Activated B cell treated with CpG ODN at 0.5 μM for 24 hours (primary cell): ENCODE measurements at regions of chr2 and their contacts with region 1.

Region 1: DNA sequence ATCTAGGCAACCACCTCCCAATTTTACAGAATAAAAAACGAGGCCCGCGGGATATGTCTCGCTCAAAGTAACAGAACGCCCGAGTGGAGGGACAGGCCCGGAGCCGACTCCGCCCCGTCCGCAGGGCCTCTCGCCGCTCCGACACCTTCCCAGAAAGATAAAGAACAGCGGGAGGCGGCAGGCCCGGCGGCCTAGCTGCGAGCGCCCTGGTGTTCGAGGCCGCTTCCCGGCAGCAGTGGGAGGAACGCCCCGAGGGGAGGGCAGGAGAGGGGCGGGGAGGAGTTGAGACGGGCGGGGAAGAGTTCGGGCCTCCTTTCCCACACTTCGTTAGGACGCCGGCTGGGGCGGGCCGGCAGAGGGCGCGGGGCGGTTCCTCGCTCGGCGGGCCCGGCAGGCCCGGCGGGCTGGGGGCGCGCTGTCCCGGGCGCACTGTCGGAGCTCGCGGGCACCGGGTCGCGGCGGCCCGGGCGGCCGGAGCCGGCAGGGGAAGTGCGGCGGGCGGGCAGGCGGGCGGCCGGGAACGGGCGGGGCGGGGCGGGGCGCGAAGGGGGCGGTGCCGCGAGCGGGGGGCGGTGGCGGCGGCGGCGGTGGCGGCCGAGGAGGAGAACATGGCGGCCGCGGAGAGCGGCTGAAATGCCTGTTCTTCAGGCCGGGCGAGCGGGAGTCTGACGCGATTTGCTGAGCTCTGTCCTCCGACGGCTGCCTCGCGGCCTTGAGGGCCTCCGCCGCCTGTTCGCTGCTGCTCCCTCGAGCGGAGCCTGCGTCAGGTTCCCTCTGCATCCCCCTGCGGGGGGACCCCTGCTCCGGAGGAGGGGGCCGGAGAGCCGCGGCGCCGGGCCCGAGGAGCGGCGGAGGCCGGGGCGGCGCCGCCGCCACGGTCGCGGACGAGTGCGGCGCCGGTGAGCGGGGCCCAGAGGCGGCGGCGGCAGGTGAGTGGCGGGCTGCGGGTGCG is at the start of gene NCOA1:
- DNase-seq: peak; percentile 87
- ATAC-seq: peak; percentile 82
- H3K4me3 Mint-ChIP-seq: peak within 1 kb of the TSS; percentile 94
- H3K27ac Mint-ChIP-seq: peak within 1 kb of the TSS; percentile 95
- H3K4me1 Mint-ChIP-seq: peaks cover 42% of the 10 kb centered on the region
- H3K27me3 Mint-ChIP-seq: no peaks in the 10 kb centered on the region
- CTCF ChIP-seq: no peak
- total RNA-seq, gene NCOA1: 44.9 and 49.5 TPM in 2 replicates

Region 2: GRCh38 chr2:24334245-24334633 is 156.7 kb before region 1 on chr2:
- CTCF ChIA-PET with region 1: no interaction called
- POLR2A ChIA-PET with region 1: no interaction called
- intact Hi-C with region 1: no loop called
- DNase-seq: no peak
- ATAC-seq: no peak
- H3K4me3 Mint-ChIP-seq: no peak overlapping the region
- H3K27ac Mint-ChIP-seq: peak overlapping the region; percentile 84
- H3K4me1 Mint-ChIP-seq: peaks cover 84% of the 10 kb centered on the region
- H3K27me3 Mint-ChIP-seq: no peaks in the 10 kb centered on the region
- CTCF ChIP-seq: no peak

Region 3: GRCh38 chr2:24509425-24509824 is 18.5 kb after region 1 on chr2:
- CTCF ChIA-PET with region 1: interaction called, 4 read pairs
- POLR2A ChIA-PET with region 1: interaction called, 6 read pairs
- intact Hi-C with region 1: loop called (anchors 2 kb)
- DNase-seq: no peak
- ATAC-seq: peak; percentile 93
- H3K4me3 Mint-ChIP-seq: peak overlapping the region; percentile 52
- H3K27ac Mint-ChIP-seq: peak overlapping the region; percentile 83
- H3K4me1 Mint-ChIP-seq: peaks cover 68% of the 10 kb centered on the region
- H3K27me3 Mint-ChIP-seq: no peaks in the 10 kb centered on the region
- CTCF ChIP-seq: no peak

Region 4: GRCh38 chr2:24577481-24577880 is 86.5 kb after region 1 on chr2:
- CTCF ChIA-PET with region 1: interaction called, 4 read pairs
- POLR2A ChIA-PET with region 1: interaction called, 8 read pairs
- intact Hi-C with region 1: loop called (anchors 2 kb)
- DNase-seq: no peak
- ATAC-seq: peak; percentile 79
- H3K4me3 Mint-ChIP-seq: peak overlapping the region; percentile 68
- H3K27ac Mint-ChIP-seq: peak overlapping the region; percentile 77
- H3K4me1 Mint-ChIP-seq: peaks cover 69% of the 10 kb centered on the region
- H3K27me3 Mint-ChIP-seq: no peaks in the 10 kb centered on the region
- CTCF ChIP-seq: no peak

Region 5: DNA sequence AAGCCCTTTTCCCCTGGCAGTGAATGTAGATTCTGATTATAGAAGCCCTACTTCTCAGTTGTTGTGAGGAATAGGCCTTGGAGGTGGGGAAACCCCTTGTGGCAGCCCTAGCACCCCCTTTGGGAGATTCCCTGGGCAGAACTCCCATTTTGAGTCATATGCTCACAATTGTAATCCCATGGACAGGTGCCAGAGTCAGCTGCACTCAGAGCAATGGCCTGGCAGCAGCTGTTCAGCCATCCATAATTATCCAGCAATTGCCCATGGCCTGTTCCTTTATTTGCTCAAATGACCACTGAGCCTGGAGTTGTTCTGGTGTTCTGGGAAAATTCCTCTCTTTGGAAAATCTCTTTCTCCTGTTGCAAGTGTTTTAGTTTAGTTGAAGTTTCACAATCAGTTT is 230.5 kb after region 1 on chr2:
- CTCF ChIA-PET with region 1: no interaction called
- POLR2A ChIA-PET with region 1: interaction called, 10 read pairs
- intact Hi-C with region 1: loop called (anchors 5 kb)
- DNase-seq: no peak
- ATAC-seq: no peak
- H3K4me3 Mint-ChIP-seq: no peak overlapping the region
- H3K27ac Mint-ChIP-seq: no peak overlapping the region
- H3K4me1 Mint-ChIP-seq: peaks cover 29% of the 10 kb centered on the region
- H3K27me3 Mint-ChIP-seq: no peaks in the 10 kb centered on the region
- CTCF ChIP-seq: no peak

Region 6: GRCh38 chr2:24792874-24793760 is 302.2 kb after region 1 on chr2 and contains the starts of genes CENPO and PTRHD1:
- CTCF ChIA-PET with region 1: no interaction called
- POLR2A ChIA-PET with region 1: interaction called, 11 read pairs
- intact Hi-C with region 1: loop called (anchors 2 kb)
- DNase-seq: peak; percentile 94
- ATAC-seq: peak; percentile 98
- H3K4me3 Mint-ChIP-seq: peak within 1 kb of the TSS; percentile 98
- H3K27ac Mint-ChIP-seq: peak within 1 kb of the TSS; percentile 100
- H3K4me1 Mint-ChIP-seq: peaks cover 18% of the 10 kb centered on the region
- H3K27me3 Mint-ChIP-seq: no peaks in the 10 kb centered on the region
- CTCF ChIP-seq: no peak
- total RNA-seq, gene CENPO: 11.2 and 13.4 TPM in 2 replicates
- total RNA-seq, gene PTRHD1: 39.6 and 41.1 TPM in 2 replicates